ENCODE measurements at regions of chr12 and their contacts with region 1.

Region 1: DNA sequence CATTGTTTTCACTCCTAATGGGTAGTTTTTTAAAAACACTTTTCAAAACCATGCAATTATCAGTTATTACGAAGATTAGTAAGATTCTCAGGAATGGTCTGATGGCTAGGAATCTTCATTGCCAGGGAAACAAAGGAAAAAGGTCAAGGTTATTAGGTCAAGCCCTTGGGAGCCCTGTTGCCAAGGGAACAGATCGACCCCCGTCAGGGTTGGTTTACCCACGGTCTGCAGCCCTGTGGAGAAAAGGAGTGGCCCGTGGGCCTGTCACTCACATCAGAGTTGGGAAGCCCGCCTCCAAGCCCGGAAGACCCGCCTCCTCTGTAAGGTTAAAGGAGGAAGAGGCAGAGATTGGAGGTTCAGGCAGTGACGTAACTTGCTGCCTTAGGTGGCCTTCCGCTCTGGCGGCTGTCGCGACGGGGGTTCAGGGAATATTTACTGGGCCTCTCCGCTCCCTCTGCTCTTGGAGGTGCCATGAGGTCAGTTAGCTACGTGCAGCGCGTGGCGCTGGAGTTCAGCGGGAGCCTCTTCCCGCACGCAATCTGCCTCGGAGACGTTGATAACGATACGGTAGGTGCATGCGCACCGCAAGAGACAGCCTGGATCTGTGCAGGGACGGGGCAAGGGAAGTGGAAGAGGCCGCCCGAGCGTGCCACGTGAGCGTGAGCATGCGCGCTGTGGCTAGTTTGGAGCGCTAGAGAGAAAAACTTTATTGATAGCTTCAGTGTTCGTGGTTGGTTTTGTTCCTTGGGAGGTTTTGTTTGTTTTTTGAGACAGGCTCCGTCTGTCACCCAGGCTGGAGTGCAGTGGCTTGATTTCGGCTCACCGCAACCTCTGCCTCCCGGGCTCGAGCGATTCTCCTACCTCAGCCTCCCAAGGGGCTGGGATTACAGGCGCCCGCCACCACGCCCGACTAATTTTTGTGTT is at the start of gene ITFG2:
- DNase-seq: peak; percentile 98
- ATAC-seq: peak; percentile 96
- H3K4me3 Mint-ChIP-seq: peak within 1 kb of the TSS; percentile 92
- H3K27ac Mint-ChIP-seq: peak within 1 kb of the TSS; percentile 98
- H3K4me1 Mint-ChIP-seq: peaks cover 26% of the 10 kb centered on the region
- H3K27me3 Mint-ChIP-seq: no peaks in the 10 kb centered on the region
- total RNA-seq, gene ITFG2: 28.0 to 35.3 TPM

Region 2: GRCh38 chr12:2004113-2004929 is 808.2 kb before region 1 on chr12 and contains the start of gene DCP1B:
- CTCF ChIA-PET with region 1: interaction called, 3 read pairs
- POLR2A ChIA-PET with region 1: no interaction called
- intact Hi-C with region 1: loop called in 1 of 2 experiments (anchors 1 kb)
- DNase-seq: peak; percentile 98
- ATAC-seq: peak; percentile 100
- H3K4me3 Mint-ChIP-seq: peak within 1 kb of the TSS; percentile 95
- H3K27ac Mint-ChIP-seq: peak within 1 kb of the TSS; percentile 99
- H3K4me1 Mint-ChIP-seq: peaks cover 25% of the 10 kb centered on the region
- H3K27me3 Mint-ChIP-seq: no peaks in the 10 kb centered on the region
- total RNA-seq, gene DCP1B: 14.5 to 16.1 TPM

Region 3: DNA sequence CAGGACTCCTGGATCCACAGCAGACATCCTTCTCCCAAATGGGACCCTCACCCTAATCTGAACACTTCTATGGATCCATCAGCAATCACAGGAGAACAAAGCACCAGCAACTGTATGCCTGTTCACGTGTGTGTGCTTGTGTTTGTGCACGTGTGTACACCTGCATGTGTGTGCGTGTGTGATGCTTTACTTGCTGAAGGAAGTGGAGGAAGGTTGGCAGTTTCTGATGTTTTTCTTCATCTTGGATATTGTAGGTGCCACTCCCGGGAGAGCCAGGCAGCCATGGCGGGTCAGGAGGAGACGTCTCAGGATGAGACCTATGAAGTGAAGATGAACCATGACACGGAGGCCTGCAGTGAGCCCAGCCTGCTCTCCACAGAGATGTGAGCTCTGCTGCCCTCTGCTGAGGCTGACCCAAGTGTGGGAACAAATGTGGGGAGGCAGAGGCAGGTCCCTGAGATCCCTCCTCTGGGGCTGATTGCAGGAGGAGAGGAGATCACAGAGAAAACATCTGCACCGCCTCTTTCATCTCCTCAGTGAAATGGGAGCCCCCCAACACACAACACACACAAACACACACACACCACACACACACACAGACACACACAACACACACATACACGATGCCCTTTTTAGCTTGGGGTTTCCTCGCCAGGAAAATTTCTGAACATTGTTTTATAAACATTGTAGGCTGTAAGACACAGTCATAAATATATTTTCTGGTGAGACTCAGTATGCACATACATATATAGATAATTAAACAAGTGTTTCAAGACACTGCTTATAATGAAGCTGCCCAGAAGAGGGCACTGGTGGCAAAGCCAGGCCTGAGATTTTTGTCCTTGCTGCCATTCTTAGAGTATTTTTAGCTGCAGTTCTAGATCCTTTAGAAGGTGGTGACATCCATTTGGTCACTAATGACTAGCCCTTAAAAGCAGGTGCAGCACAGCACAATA is 130.0 kb before region 1 on chr12:
- CTCF ChIA-PET with region 1: interaction called, 3 read pairs
- POLR2A ChIA-PET with region 1: no interaction called
- intact Hi-C with region 1: loop called (anchors 1 to 2 kb)
- DNase-seq: peak; percentile 62
- ATAC-seq: peak; percentile 74
- H3K4me3 Mint-ChIP-seq: no peak overlapping the region
- H3K27ac Mint-ChIP-seq: peak overlapping the region; percentile 86
- H3K4me1 Mint-ChIP-seq: peaks cover 6% of the 10 kb centered on the region
- H3K27me3 Mint-ChIP-seq: no peaks in the 10 kb centered on the region

Region 4: DNA sequence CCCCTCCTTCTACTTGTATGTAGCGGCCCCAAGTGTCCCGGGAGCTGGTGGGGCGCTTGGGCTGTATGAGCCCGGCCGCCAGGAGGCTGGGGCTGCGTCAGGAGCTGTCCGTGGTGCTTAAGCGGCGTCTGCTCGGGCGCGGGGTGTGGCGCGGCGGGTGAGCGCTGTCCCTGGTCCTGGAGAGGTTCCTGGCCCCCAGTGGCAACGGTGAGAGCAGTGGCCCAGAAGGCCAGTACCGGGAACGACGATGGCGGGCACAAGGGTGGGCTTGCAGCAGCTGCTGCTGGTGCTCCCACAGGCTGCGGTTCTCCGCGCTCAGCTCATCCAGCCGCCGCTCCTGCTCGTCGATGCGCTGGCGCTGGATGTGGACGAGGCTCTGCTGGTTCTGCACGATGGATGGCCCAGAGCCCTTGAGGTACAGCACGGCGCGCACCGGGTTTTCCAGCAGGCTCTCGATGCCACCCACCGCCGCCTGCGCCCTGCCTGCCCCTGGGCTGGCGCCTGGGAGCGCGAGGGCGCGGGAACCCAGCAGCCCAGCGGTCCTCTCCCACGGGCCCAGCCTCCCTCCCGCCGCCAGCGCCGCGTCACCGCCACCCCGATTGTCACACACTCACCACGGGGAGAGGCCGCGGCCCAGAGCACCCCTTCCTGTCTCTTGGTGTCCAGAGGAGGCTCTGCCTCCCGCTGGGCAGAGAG is 59.7 kb before region 1 on chr12:
- CTCF ChIA-PET with region 1: no interaction called
- POLR2A ChIA-PET with region 1: no interaction called
- intact Hi-C with region 1: loop called in 1 of 2 experiments (anchors 1 kb)
- DNase-seq: peak; percentile 92
- ATAC-seq: peak; percentile 99
- H3K4me3 Mint-ChIP-seq: no peak overlapping the region
- H3K27ac Mint-ChIP-seq: no peak overlapping the region
- H3K4me1 Mint-ChIP-seq: no peaks in the 10 kb centered on the region
- H3K27me3 Mint-ChIP-seq: peaks cover 22% of the 10 kb centered on the region

Region 5: GRCh38 chr12:2862876-2863275 is 50.3 kb after region 1 on chr12:
- CTCF ChIA-PET with region 1: no interaction called
- POLR2A ChIA-PET with region 1: no interaction called
- intact Hi-C with region 1: loop called in 1 of 2 experiments (anchors 2 kb)
- DNase-seq: no peak
- ATAC-seq: no peak
- H3K4me3 Mint-ChIP-seq: no peak overlapping the region
- H3K27ac Mint-ChIP-seq: no peak overlapping the region
- H3K4me1 Mint-ChIP-seq: peaks cover 2% of the 10 kb centered on the region
- H3K27me3 Mint-ChIP-seq: no peaks in the 10 kb centered on the region

Region 6: GRCh38 chr12:2890388-2891239 is 78.1 kb after region 1 on chr12 and contains the start of gene TULP3:
- CTCF ChIA-PET with region 1: interaction called, 4 read pairs
- POLR2A ChIA-PET with region 1: no interaction called
- intact Hi-C with region 1: loop called (anchors 1 kb)
- DNase-seq: peak; percentile 98
- ATAC-seq: peak; percentile 98
- H3K4me3 Mint-ChIP-seq: peak within 1 kb of the TSS; percentile 85
- H3K27ac Mint-ChIP-seq: peak within 1 kb of the TSS; percentile 79
- H3K4me1 Mint-ChIP-seq: peaks cover 25% of the 10 kb centered on the region
- H3K27me3 Mint-ChIP-seq: no peaks in the 10 kb centered on the region
- total RNA-seq, gene TULP3: 5.9 to 7.3 TPM